ENCODE measurements at regions of chr14 and their contacts with region 1.

Region 1: DNA sequence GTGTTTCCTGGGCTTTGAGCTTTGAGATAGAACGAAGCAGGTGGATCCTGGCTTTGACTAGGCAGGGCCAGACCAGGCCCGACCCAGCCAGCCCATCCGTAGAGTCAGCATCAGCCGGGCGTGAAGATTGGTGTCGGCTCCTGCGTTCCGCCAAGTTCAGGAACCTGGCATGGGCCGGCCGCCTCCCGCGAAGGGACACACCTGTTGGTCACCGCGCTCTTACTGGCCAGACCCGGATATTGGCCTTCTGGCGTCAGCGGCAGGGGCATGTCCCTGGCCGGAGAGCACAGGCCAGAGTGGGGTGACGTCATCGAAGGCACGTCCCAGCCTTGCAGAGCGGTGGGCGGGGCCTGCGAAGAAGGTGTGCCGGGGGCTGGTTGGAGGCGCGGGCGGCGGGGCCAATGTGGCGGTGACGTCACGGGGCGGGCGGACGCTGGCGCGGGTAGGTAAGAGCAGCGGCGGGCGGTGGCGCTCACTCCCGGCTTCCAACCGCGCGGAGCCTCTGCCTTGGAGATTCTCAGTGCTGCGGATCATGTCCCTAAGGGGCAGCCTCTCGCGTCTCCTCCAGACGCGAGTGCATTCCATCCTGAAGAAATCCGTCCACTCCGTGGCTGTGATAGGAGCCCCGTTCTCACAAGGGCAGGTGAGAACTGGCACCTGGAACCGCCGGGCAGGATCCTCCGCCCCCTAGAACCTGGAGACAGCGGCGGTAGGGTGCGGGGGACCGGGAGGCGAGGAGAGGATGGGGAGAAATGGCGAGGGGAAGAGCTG is at the start of gene ARG2:
- DNase-seq: peak; percentile 96
- H3K4me3 ChIP-seq: peak within 1 kb of the TSS; percentile 63 to 73 (median 67)
- H3K27ac ChIP-seq: peak within 1 kb of the TSS; percentile 71
- H3K4me1 ChIP-seq: peaks cover 28% of the 10 kb centered on the region
- H3K27me3 ChIP-seq: peaks cover 2 to 4% of the 10 kb centered on the region in 2 experiments
- CTCF ChIP-seq: no peak
- POLR2A ChIP-seq: no peak
- total RNA-seq, gene ARG2: 19.8 and 22.5 TPM in 2 replicates

Region 2: DNA sequence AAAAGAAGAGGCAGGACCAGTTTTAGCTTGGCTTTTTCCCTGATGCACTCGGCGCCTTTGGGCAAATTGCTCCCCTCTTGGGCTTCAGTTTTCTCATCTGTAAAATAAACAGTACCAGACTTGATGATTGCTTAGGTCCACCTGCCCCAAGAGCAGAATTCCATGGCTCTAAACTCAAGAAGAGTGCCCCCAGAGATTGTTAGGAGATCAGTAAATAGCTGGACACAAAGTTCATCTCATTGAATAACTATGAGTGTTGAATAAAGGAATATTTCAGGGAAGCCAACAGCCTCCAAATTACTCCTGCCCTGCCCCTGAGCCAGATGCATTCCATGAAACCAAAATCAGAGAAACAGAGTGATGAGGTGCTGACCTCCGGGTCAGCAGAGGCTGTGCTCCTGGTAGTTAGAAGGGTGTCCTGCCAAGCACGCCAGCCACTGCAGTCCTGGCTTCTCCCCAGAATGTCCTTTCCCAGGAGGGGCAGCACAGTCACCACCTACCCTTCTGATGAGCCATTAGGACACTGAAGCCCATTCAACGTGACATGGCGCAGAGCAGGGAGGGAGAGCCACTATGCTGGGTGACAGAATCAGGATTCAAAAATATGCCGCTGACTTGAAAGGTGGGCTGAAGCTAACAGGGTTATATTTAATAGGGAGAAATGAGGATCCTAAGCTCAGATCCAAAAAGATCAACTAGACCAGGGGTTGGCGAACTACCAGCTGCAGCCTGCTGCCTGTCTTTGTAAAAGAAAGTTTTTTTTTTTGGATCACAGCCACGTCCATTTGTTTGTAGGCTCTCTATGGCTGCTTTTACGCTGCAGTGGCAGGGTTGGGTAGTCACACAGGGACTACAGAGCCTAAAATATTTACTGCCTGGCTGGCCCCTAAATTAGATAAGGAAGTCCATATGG is 173.3 kb before region 1 on chr14:
- CTCF ChIA-PET with region 1: no interaction called
- POLR2A ChIA-PET with region 1: no interaction called
- dilution Hi-C with region 1: no loop called
- intact Hi-C with region 1: no loop called
- DNase-seq: no peak
- H3K4me3 ChIP-seq: no peak overlapping the region
- H3K27ac ChIP-seq: no peak overlapping the region
- H3K4me1 ChIP-seq: peaks cover 9% of the 10 kb centered on the region
- H3K27me3 ChIP-seq: peaks cover 4% of the 10 kb centered on the region in 2 experiments
- CTCF ChIP-seq: no peak
- POLR2A ChIP-seq: no peak

Region 3: GRCh38 chr14:67599698-67600561 is 19.7 kb before region 1 on chr14 and contains the start of gene PIGH:
- CTCF ChIA-PET with region 1: interaction called, 23 read pairs
- POLR2A ChIA-PET with region 1: no interaction called
- dilution Hi-C with region 1: no loop called
- intact Hi-C with region 1: loop called (anchors 1 kb)
- DNase-seq: peak; percentile 88
- H3K4me3 ChIP-seq: peak within 1 kb of the TSS; percentile 33 to 60 (median 54)
- H3K27ac ChIP-seq: no peak within 1 kb of the TSS
- H3K4me1 ChIP-seq: peaks cover 6% of the 10 kb centered on the region
- H3K27me3 ChIP-seq: peaks cover 0 to 4% of the 10 kb centered on the region in 2 experiments
- CTCF ChIP-seq: peak; percentile 41 to 80
- POLR2A ChIP-seq: peak; percentile 80
- total RNA-seq, gene PIGH: 9.9 and 12.3 TPM in 2 replicates

Region 4: GRCh38 chr14:67636361-67636919 is 16.8 kb after region 1 on chr14:
- CTCF ChIA-PET with region 1: interaction called, 20 read pairs
- POLR2A ChIA-PET with region 1: no interaction called
- dilution Hi-C with region 1: no loop called
- intact Hi-C with region 1: no loop called
- DNase-seq: peak; percentile 8
- H3K4me3 ChIP-seq: no peak overlapping the region
- H3K27ac ChIP-seq: no peak overlapping the region
- H3K4me1 ChIP-seq: no peaks in the 10 kb centered on the region
- H3K27me3 ChIP-seq: no peaks in the 10 kb centered on the region
- CTCF ChIP-seq: no peak
- POLR2A ChIP-seq: no peak

Region 5: GRCh38 chr14:67653651-67654280 is 34.1 kb after region 1 on chr14:
- CTCF ChIA-PET with region 1: interaction called, 25 read pairs
- POLR2A ChIA-PET with region 1: no interaction called
- dilution Hi-C with region 1: no loop called
- intact Hi-C with region 1: no loop called
- DNase-seq: no peak
- H3K4me3 ChIP-seq: no peak overlapping the region
- H3K27ac ChIP-seq: no peak overlapping the region
- H3K4me1 ChIP-seq: no peaks in the 10 kb centered on the region
- H3K27me3 ChIP-seq: no peaks in the 10 kb centered on the region
- CTCF ChIP-seq: no peak
- POLR2A ChIP-seq: no peak

Region 6: DNA sequence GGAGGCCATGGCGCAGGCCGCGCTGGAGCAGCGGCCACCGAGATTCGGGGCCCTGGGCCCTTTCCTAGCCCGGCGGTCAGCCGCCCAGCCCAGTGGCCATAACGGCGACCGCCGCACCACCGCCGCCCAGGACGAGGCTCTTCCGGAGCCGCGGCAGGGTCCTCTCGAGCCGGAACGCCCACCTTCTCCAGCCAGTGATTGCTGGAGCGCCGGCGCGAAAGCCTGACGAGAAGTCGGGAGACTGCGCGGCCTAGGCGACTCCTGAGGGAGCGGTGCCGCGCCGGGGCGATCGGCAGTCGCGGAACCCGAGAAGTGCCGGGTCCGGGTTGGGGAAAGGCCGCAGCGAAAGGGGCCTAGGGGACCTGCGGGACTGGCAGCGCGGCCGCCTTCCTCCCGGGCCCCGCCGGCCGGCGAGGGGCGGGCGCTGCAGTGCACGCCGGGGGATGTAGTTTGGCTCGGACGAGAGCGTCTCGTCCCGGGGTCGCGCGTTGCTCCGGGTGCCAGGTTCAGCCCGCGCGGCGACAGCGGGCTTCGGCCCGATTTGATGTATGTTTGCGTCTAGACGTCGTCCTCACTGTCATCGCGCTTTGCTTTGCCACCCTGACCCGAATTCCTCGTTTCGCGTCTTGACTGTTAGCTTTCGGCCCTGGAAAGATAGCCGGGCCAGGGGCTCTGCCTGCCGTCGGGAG is 55.0 kb after region 1 on chr14 and contains the start of gene VTI1B:
- CTCF ChIA-PET with region 1: interaction called, 437 read pairs
- POLR2A ChIA-PET with region 1: no interaction called
- dilution Hi-C with region 1: no loop called
- intact Hi-C with region 1: no loop called
- DNase-seq: peak; percentile 88
- H3K4me3 ChIP-seq: peak within 1 kb of the TSS; percentile 88 to 99 (median 97)
- H3K27ac ChIP-seq: peak within 1 kb of the TSS; percentile 83
- H3K4me1 ChIP-seq: peaks cover 18% of the 10 kb centered on the region
- H3K27me3 ChIP-seq: no peaks in the 10 kb centered on the region
- CTCF ChIP-seq: no peak
- POLR2A ChIP-seq: peak; percentile 69
- total RNA-seq, gene VTI1B: 79.4 and 90.0 TPM in 2 replicates

Measured in endothelial cell of umbilical vein (primary cell).